ENCODE measurements at regions of chr1 and their contacts with region 1.

Region 1: DNA sequence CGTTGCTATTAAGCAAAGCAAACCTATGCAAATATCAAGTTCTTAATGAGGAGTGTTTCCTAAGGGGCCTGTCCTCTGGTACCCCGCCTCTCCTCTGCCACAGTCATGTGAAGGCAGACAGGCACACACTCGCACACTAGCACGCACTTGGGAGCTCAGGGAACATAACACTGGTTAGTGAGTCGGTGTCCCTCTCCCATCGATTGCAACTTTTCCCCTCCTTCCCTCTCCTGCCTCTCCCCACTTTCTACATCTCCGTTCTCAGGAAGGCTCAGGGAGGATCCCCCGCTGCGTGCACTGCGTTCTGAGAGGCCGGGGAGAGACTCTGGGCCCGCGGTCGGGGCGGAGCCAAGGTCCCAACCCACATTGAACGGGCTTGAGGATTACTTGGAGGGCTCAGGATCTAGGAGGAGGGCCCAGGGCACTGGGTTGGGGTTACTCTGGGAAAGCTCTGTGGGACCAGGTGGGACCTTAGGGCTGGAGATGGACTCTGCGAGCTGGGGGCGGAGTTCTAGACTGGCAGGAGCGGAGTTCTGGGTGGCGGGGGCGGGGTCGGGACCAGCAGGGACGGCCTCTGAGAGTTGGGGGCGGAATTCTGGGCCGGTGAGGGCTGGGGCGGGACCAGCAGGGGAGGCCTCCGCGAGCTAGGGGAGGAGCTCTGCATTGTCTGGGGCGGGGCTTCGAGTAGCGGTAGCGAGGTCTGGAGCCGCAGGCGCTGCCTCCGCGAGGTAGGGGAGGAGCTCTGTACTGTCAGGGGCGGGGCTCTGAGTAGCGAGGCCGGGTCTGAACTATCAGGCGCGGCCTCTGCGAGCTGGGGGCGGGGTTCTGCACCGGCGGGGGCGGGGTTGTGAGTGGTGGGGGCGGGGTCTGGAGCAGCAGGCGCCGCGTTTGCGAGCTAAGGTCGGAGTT is 533 bp upstream of the LEPR start:
- DNase-seq: peak; percentile 99
- H3K4me3 Mint-ChIP-seq: no peak overlapping the region
- H3K27ac Mint-ChIP-seq: peak overlapping the region; percentile 89
- H3K4me1 Mint-ChIP-seq: peaks cover 20% of the 10 kb centered on the region
- H3K27me3 Mint-ChIP-seq: no peaks in the 10 kb centered on the region

Region 2: DNA sequence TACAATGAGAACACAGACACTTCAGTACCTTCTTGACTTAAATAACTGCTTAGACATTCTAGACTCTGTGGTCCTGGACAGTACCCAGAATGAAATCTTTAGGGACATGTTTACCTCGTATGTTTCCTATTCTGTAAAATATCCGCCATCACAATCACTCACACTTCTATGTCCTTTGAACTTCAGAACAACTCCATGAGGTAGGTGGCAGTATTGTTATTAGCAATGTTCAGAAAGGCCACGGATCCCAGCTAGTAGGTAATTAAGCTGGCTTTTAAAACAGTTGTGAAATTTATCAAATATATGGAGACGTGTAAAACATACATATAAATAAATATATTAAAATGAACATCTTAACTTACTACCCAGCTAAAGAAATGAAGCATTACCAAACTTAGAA is 866.7 kb before region 1 on chr1:
- CTCF ChIA-PET with region 1: no interaction called
- intact Hi-C with region 1: loop called (anchors 5 kb)
- DNase-seq: no peak
- H3K4me3 Mint-ChIP-seq: no peak overlapping the region
- H3K27ac Mint-ChIP-seq: no peak overlapping the region
- H3K4me1 Mint-ChIP-seq: peaks cover 41% of the 10 kb centered on the region
- H3K27me3 Mint-ChIP-seq: no peaks in the 10 kb centered on the region

Region 3: DNA sequence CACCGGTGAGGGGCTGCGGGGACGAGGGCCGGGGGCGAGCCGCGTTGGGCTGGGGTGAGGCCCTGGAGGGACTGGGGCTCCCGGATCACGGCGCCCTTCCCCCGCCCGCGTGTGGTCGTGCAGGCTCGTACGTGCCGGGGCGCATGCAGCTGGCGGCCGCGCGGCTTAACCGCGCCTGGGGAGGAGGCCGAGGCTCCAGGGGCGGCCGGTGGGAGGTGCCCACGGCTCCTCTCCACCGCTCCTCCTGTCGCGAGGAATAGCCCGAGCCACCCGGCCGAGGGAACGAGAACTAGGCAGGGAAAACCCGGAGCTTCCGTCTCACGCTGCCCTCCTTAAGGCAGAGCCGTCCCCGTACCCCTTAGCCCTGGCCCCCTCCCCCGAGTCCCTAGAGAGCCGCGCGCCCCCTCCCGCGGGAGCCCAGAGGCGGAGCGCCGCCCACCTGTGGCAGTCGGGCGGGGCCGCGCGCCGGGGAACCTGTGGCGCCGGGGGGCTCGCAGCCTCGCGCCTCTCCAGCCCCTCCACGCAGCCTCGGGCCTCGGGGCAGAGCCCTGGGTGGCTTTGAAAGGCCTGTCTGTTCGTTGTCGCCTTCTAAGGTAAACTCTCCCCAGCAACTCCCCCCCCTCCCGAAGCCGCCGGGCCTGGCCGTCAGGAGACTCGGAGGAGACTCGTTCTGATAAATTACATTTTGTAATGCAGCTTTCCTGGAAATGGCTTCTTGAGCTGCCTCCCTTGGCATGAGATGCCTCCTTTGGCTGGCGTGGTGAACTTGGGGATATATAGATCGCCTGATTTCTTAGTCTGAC is 271.2 kb before region 1 on chr1:
- CTCF ChIA-PET with region 1: no interaction called
- intact Hi-C with region 1: loop called (anchors 2 kb)
- DNase-seq: peak; percentile 41
- H3K4me3 Mint-ChIP-seq: peak overlapping the region; percentile 80
- H3K27ac Mint-ChIP-seq: no peak overlapping the region
- H3K4me1 Mint-ChIP-seq: peaks cover 10% of the 10 kb centered on the region
- H3K27me3 Mint-ChIP-seq: peaks cover 47% of the 10 kb centered on the region

Region 4: GRCh38 chr1:65254319-65255034 is 165.5 kb before region 1 on chr1:
- CTCF ChIA-PET with region 1: no interaction called
- intact Hi-C with region 1: loop called (anchors 1 kb)
- DNase-seq: peak; percentile 88
- H3K4me3 Mint-ChIP-seq: peak overlapping the region; percentile 86
- H3K27ac Mint-ChIP-seq: no peak overlapping the region
- H3K4me1 Mint-ChIP-seq: peaks cover 16% of the 10 kb centered on the region
- H3K27me3 Mint-ChIP-seq: peaks cover 4% of the 10 kb centered on the region

Region 5: GRCh38 chr1:65812065-65812464 is 392.1 kb after region 1 on chr1:
- CTCF ChIA-PET with region 1: no interaction called
- intact Hi-C with region 1: loop called (anchors 1 kb)
- DNase-seq: peak; percentile 78
- H3K4me3 Mint-ChIP-seq: no peak overlapping the region
- H3K27ac Mint-ChIP-seq: peak overlapping the region; percentile 36
- H3K4me1 Mint-ChIP-seq: peaks cover 12% of the 10 kb centered on the region
- H3K27me3 Mint-ChIP-seq: peaks cover 31% of the 10 kb centered on the region